BJ (cell line): ENCODE measurements at regions of chr17 and their contacts with region 1.

Region 1: GRCh38 chr17:64025732-64026294 is 5.4 kb upstream of the ICAM2 start:
- DNase-seq: no peak
- H3K4me3 ChIP-seq: no peak overlapping the region
- H3K27me3 ChIP-seq: no peaks in the 10 kb centered on the region
- CTCF ChIP-seq: peak; percentile 96

Region 2: DNA sequence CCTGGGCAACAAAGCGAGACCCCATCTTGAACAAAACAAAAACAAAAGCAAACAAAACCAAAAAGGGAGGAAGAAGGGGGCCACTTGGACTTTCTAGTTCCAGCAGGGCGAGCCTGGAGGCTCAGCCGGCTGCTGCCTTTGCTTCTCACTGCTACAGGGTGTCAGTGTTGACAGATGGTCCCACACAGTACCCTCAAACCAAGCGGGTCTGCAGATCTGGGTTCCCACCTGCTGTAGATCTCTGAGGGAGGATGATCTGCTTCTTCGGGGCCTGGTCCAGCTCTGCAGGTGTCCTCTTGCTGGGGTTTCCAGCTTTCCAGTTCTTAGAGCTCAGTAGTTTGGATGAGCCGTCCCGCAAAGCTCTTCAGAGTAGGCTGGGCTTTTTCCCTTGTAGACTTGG is 121.5 kb before region 1 on chr17:
- CTCF ChIA-PET with region 1: interaction called, 12 read pairs
- POLR2A ChIA-PET with region 1: no interaction called
- DNase-seq: no peak
- H3K4me3 ChIP-seq: no peak overlapping the region
- H3K27me3 ChIP-seq: peaks cover 2% of the 10 kb centered on the region; the same call in 1 of the 2 replicates
- CTCF ChIP-seq: no peak

Region 3: GRCh38 chr17:63919311-63919723 is 106.5 kb before region 1 on chr17:
- CTCF ChIA-PET with region 1: interaction called, 139 read pairs
- POLR2A ChIA-PET with region 1: no interaction called
- DNase-seq: no peak
- H3K4me3 ChIP-seq: no peak overlapping the region
- H3K27me3 ChIP-seq: peaks cover 4% of the 10 kb centered on the region; the same call in 1 of the 2 replicates
- CTCF ChIP-seq: peak; percentile 92

Region 4: DNA sequence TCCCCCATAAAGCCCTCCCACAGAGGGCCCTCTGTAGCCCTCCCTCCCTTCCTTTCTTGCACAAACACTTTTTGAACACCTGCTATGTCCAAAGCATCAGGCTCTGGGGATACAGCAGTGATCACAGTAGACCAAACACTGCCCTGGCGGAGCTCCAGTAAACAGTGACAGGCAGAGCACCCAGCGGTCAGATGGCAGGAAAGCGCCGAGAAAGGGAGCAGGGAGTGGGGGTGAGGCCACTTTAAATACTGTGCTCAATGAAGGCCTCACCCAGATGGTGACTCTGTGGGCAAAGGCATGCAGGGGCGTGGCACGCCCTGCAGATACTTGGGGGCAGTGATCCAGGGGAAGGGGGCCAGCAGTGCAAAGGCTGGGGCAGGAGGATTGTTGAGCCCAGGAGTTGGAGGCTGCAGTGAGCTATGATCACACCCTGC is 20.1 kb before region 1 on chr17:
- CTCF ChIA-PET with region 1: interaction called, 30 read pairs
- POLR2A ChIA-PET with region 1: no interaction called
- DNase-seq: no peak
- H3K4me3 ChIP-seq: no peak overlapping the region
- H3K27me3 ChIP-seq: no peaks in the 10 kb centered on the region
- CTCF ChIP-seq: no peak

Region 5: GRCh38 chr17:64055188-64056142 is 29.7 kb after region 1 on chr17:
- CTCF ChIA-PET with region 1: interaction called, 11 read pairs
- POLR2A ChIA-PET with region 1: no interaction called
- DNase-seq: no peak
- H3K4me3 ChIP-seq: no peak overlapping the region
- H3K27me3 ChIP-seq: no peaks in the 10 kb centered on the region
- CTCF ChIP-seq: no peak

Region 6: DNA sequence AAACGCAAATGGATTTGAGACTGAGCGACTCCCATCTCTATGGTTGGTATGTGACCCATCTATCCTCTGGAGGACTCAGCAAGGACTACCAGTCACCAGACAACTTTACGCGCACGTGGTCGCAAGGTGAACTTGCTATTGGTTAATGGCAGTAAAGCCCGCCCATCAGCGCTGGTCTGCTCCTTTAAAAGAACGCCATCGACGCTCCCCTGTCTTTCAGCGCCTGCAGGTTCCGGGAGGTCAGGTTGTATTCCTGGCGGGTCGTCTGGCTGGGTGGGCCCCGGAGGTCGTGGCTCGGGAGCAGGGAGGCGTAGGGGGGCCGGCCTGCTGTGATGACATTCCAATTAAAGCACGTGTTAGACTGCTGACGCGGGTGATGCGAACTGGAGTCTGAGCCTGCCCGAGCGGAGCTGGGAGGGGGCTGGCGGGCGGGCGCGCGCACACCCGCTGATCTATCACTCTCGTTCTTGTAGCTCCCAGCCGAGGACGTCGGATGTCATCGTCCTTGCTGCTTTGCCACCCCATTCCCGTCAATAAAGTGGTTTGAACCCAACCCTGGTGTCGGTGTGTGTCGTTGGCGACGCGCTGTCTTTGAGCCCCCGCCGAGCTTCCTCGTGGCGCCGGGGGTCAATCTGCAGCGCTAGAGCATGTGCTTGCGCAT is 120.1 kb after region 1 on chr17:
- CTCF ChIA-PET with region 1: interaction called, 388 read pairs
- POLR2A ChIA-PET with region 1: no interaction called
- DNase-seq: peak; percentile 96
- H3K4me3 ChIP-seq: peak overlapping the region; percentile 88
- H3K27me3 ChIP-seq: no peaks in the 10 kb centered on the region
- CTCF ChIP-seq: no peak